GM18951 (cell line): ENCODE measurements at regions of chr2 and their contacts with region 1.

Region 1: DNA sequence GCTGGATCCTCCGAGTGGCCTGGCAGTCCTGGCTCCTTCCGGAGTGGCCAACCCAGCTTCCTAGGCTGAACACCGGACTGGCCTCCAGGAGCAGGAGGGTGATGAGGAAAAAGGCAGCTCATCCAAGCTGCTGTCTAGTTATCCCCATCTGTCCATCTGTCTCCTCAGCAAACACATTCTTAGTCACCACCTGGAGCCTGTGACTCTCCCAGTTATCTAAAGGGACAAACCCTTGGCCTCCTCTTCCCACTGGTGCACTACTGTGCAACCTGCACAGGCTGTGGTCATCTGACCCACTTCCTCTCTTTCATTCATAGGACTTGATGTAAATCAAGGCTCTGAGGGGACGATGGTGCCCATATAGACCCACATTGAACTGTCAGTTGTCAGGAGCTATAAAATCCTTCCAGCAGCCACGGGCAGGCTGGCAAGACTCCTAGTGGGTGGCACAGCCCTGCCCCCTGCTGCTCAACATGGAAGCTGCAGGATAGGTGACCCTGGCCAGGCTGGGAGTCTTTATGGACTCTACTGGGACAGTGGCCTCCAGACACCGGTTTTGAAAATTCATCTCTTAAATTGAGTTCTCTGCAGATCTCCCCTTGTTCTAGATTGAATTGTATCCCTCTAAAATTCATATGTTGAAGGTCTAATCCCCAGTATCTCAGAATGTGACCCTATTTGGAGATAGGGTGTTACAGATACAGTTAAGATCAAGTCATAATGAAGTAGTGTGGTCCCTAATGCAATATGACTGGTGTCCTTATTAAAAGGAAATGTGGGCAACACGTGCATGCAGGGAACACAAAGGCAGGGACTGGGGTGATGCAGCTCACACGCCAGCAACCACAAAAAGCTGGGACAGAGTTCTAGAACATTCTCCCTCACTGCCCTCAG is 29.3 kb upstream of the DUSP2 start:
- POLR2A ChIP-seq: no peak

Region 2: GRCh38 chr2:95799892-95800291 is 374.6 kb before region 1 on chr2:
- in situ Hi-C with region 1: loop called (anchors 25 kb)
- POLR2A ChIP-seq: no peak

Region 3: GRCh38 chr2:96024336-96025193 is 149.9 kb before region 1 on chr2:
- in situ Hi-C with region 1: no loop called
- POLR2A ChIP-seq: no peak